GM12878 (cell line): ENCODE measurements at regions of chr1 and their contacts with region 1.

Region 1: DNA sequence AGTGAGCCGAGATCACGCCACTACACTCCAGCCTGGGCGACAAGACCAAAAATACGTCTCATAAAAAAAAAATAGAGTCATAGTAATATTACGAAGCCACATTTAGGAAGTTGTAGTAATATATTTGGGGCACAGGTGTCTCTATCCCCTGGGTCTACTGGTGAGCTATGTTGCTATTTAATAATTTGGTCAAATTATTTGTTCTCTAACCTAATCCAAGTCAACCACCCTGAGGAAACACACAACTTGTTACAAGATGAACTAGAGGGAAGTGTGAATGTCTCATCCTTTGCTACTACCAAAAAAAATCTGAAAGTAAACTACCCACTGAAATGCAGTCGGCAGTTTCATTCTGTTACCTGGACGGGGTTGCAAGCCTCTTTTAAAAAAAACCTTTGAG is 35.3 kb downstream of the RGS8 start:
- DNase-seq: no peak
- ATAC-seq: peak; percentile 75
- H3K4me3 ChIP-seq: no peak overlapping the region
- H3K27ac ChIP-seq: no peak overlapping the region
- H3K4me1 ChIP-seq: peaks cover 41% of the 10 kb centered on the region
- H3K27me3 ChIP-seq: no peaks in the 10 kb centered on the region
- CTCF ChIP-seq: 0 out of 6 replicates have a peak, but pooled peaks of 1 of the 3 experiments have one; percentile 2
- EP300 ChIP-seq: no peak
- POLR2A ChIP-seq: no peak
- RAD21 ChIP-seq: peak; percentile 13; the same call in 1 of the 2 replicates

Region 2: GRCh38 chr1:182629499-182630096 is 19.4 kb before region 1 on chr1:
- CTCF ChIA-PET with region 1: interaction called, 7 read pairs
- POLR2A ChIA-PET with region 1: interaction called, 7 read pairs
- RAD21 ChIA-PET with region 1: interaction called, 5 read pairs
- SMC1A ChIA-PET with region 1: interaction called, 78 read pairs
- in situ Hi-C with region 1: no loop called
- intact Hi-C with region 1: no loop called
- DNase-seq: no peak
- ATAC-seq: peak; percentile 88
- H3K4me3 ChIP-seq: no peak overlapping the region
- H3K27ac ChIP-seq: no peak overlapping the region
- H3K4me1 ChIP-seq: peaks cover 52% of the 10 kb centered on the region
- H3K27me3 ChIP-seq: no peaks in the 10 kb centered on the region
- CTCF ChIP-seq: no peak
- EP300 ChIP-seq: peak; percentile 26 to 61; a peak in 2 of 4 replicates
- POLR2A ChIP-seq: no peak
- RAD21 ChIP-seq: no peak

Region 3: DNA sequence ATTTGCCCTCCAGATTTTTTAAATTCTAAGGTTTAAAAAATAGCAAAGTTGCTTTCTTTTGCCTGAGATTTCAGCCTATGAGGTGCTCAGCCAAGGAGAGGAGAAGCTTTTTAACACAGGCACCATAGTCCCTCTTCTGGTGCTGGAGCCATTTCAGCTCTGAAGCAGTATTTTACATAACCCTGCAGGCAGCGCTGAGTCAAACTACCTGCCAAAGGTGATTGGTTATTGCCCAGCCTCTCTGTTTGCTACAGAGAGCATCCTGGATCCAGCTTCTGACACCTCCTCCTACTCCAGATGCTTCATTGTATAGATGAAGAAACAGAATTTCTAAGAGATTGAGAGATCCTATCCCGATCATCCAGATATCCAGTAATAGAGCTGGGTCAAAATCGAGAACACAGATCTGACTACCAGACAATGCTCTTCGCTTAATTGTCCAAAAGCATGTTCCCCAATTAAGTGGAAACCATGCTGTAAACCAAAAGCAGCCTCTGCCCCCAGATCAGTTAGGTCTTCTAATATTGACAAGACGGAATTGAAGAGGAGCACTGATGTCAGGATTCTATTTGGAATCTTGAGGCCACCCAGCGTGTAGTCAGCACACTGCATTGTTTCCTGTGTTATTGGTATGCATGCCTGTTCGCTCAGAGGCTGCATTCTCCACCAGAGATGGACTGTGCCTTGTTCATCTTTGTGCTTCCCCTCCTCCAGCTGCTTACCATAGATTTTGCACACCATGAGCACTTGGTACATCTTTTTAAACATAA is 13.3 kb after region 1 on chr1:
- CTCF ChIA-PET with region 1: interaction called, 9 read pairs
- POLR2A ChIA-PET with region 1: interaction called, 5 read pairs
- RAD21 ChIA-PET with region 1: interaction called, 3 read pairs
- SMC1A ChIA-PET with region 1: interaction called, 54 read pairs
- in situ Hi-C with region 1: no loop called
- intact Hi-C with region 1: no loop called
- DNase-seq: no peak
- ATAC-seq: no peak
- H3K4me3 ChIP-seq: no peak overlapping the region
- H3K27ac ChIP-seq: no peak overlapping the region
- H3K4me1 ChIP-seq: no peaks in the 10 kb centered on the region
- H3K27me3 ChIP-seq: no peaks in the 10 kb centered on the region
- CTCF ChIP-seq: no peak
- EP300 ChIP-seq: no peak
- POLR2A ChIP-seq: no peak
- RAD21 ChIP-seq: no peak